Ascending aorta (tissue), 2 donors: ENCODE measurements at regions of chr1 and their contacts with region 1.

Region 1: GRCh38 chr1:19448491-19449439 is 36.6 kb downstream of the CAPZB start:
- DNase-seq: peak in 1 of 2 donors; percentile 83
- H3K4me3 ChIP-seq: peak overlapping the region; percentile 8 to 9
- H3K27ac ChIP-seq: peak overlapping the region; percentile 88 to 93
- H3K4me1 ChIP-seq: peaks cover 56 to 92% of the 10 kb centered on the region in 2 donors
- H3K27me3 ChIP-seq: no peaks in the 10 kb centered on the region
- CTCF ChIP-seq: no peak

Region 2: DNA sequence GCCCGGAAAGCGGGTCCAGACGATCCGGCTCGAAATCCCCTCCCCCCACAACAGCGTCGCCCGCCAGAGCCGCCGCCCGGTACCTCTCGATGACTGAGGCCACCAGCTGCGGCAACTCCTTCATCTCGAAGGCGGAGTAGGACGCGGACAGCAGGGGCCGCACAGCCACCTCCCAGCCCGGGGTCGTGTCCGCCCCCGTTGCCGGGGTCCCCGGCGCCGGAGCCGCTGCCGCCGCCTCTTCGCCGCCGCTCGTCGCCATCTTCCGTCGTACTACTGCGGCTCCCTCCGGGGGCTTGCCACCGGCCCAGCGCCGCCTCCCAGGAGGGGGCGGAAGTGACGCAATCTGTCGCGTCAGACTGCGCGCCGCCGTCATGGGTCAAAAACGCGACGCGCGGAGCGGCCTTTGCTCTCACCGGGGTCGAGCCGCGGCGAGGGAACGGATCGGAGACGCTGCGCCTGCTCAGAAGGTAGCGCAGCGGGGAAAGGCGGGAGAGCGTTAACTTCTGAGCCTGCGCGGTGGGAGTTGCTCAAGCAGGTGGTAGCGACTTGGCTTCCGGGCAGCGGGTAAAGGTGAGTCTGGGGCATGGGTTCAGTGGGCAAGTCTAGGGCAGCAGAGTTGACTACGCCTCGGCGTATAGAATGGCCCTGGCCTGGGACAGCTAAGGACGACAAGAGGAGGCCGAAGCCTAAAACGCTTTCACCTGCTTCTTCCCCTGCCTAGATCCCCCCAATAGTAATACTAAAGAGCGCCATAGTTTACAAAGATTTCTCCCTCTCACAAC is 238.6 kb before region 1 on chr1 and contains the start of gene UBR4:
- intact Hi-C with region 1: no loop called
- DNase-seq: peak; percentile 57 to 96
- H3K4me3 ChIP-seq: peak within 1 kb of the TSS; percentile 67 to 75
- H3K27ac ChIP-seq: peak within 1 kb of the TSS; percentile 90 to 95
- H3K4me1 ChIP-seq: peaks cover 6 to 29% of the 10 kb centered on the region in 2 donors
- H3K27me3 ChIP-seq: no peaks in the 10 kb centered on the region
- CTCF ChIP-seq: peak in 1 of 3 experiments; percentile 8
- total RNA-seq, gene UBR4: 222 TPM

Region 3: DNA sequence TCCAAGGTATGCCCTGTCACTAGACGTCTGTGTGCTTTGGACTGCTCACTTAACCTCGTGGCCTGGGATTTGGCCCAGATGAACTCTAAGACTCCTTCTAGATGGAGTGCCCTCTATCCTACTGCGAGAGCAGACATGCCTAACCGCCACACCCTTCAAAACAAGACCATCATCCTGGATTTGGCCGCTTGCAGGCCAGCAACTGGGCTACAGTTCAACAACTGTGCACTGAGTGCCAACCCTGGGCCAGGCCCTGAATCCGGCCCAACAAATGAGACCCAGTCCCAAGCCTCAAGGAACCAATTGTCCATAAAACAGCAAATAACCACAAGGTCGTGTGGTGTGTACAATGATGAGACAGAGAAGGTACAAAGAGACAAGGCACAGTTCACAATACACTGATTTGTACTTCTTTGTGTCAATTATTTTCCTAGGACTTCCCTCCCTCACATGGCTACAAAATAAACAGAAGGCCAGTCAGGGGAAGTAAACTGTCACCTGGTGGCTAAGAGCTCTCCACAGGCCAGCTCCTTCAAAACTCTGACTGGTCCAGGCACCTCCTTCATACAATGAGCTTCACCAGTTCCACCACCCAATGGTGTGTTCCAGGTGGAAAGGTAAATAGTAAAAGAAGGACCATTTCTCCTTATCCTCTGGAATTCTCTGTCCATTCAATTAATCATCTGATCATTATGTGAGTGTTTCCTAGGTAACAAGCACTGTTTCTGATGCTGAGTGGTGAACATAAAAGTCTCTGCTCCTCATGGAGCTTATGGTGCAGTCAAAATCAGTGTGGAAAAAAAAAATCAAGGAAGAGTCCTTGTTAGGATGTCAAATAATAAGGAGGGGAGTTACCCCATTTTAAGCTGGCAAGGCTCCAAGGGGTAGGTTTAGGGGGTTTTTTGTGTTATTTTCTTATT is 23.9 kb before region 1 on chr1:
- intact Hi-C with region 1: no loop called
- DNase-seq: no peak
- H3K4me3 ChIP-seq: no peak overlapping the region
- H3K27ac ChIP-seq: peak overlapping the region; percentile 80
- H3K4me1 ChIP-seq: peaks cover 38 to 89% of the 10 kb centered on the region in 2 donors
- H3K27me3 ChIP-seq: no peaks in the 10 kb centered on the region
- CTCF ChIP-seq: no peak

Region 4: GRCh38 chr1:19436716-19437476 is 11.9 kb before region 1 on chr1:
- intact Hi-C with region 1: loop called (anchors 2 kb)
- DNase-seq: peak in 1 of 2 donors; percentile 88
- H3K4me3 ChIP-seq: peak overlapping the region in 1 of 2 donors; percentile 36
- H3K27ac ChIP-seq: peak overlapping the region; percentile 84 to 91
- H3K4me1 ChIP-seq: peaks cover 49 to 87% of the 10 kb centered on the region in 2 donors
- H3K27me3 ChIP-seq: no peaks in the 10 kb centered on the region
- CTCF ChIP-seq: no peak